Naive thymus-derived CD4-positive, alpha-beta T cell (primary cell): ENCODE measurements at regions of chr6 and their contacts with region 1.

Region 1: DNA sequence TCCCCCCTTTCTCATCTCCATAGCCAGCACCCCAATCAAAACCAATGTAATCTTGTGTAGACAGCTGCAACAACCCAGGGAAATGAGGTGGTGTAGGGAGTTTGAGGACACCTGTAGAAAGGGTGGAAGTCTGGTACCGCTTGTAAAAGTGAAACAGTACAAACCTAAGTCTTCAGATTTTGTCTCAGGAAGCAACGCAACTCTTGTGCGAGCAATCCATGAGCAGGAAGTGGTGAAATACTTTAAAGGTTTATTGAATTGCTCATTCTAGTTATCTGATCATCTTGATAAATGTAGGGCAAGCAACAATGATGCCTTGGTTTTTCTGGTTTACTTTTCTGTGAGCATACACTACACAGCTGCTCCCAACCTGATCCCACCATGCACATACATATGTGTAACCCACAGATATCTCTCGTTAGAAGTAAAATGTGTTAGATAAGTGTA is 71.1 kb upstream of the THEMIS start:
- DNase-seq: peak; percentile 9 to 89 (median 84)
- ATAC-seq: peak; percentile 92
- H3K4me3 ChIP-seq: peak overlapping the region; percentile 43
- H3K4me3 Mint-ChIP-seq: peak overlapping the region; percentile 73 to 96 (median 88)
- H3K27ac ChIP-seq: peak overlapping the region; percentile 83
- H3K27ac Mint-ChIP-seq: peak overlapping the region; percentile 71 to 99 (median 97)
- H3K4me1 ChIP-seq: peaks cover 36 to 49% of the 10 kb centered on the region in 2 donors
- H3K4me1 Mint-ChIP-seq: peaks cover 15 to 83% (median 68%) of the 10 kb centered on the region in 7 donors
- H3K27me3 ChIP-seq: no peaks in the 10 kb centered on the region
- H3K27me3 Mint-ChIP-seq: no peaks in the 10 kb centered on the region

Region 2: DNA sequence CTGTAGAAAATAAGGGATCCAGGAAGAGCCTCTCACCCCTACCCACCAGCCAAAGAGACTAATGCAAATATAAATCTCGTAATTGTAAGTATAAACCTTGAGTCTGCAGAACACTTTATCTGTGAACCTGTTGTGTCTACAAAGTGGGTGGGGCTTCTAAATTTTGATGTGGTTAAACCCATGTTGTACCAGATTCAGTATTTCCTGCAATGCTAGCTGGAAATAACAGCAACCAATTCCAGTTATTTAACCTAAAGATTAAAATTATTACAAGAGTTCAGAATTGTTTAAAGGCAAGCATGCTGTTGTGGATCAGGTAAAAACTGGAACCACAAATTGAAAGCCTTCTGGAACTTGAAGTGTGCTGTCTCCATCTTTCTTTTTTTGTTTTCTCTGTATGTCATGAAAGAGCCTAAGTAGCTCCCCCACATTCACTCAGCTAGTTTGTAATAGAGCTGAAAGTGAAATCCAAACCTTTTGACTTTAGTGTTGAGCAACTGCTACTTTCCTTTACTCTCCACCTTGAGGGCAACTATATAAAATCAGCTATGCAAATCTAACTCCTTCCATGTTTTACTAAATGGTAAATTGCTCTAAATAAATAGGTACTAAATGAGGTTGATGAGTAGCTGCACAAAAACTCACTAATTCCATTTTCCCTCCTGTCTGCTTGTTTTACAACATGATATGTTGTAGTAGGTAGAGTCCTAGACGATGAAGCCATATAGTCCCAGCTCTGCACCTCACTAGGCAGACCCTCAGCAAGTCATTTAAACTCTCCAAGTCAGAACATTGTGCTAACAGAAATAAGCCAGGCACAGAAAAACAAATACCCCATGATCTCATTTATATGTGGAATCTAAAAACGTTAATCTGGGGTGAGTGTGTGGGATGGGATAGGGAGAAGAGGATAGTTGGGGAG is 53.2 kb before region 1 on chr6:
- CTCF ChIA-PET with region 1: interaction called, 4 read pairs
- POLR2A ChIA-PET with region 1: interaction called, 12 read pairs
- intact Hi-C with region 1: loop called (anchors 1 kb)
- DNase-seq: peak in 7 of 9 donors; percentile 68 to 85 (median 80)
- ATAC-seq: peak; percentile 86
- H3K4me3 ChIP-seq: peak overlapping the region; percentile 79
- H3K4me3 Mint-ChIP-seq: peak overlapping the region; percentile 74 to 96 (median 88)
- H3K27ac ChIP-seq: peak overlapping the region; percentile 50
- H3K27ac Mint-ChIP-seq: peak overlapping the region; percentile 83 to 98 (median 93)
- H3K4me1 ChIP-seq: peaks cover 58 to 65% of the 10 kb centered on the region in 2 donors
- H3K4me1 Mint-ChIP-seq: peaks cover 33 to 95% (median 85%) of the 10 kb centered on the region in 7 donors
- H3K27me3 ChIP-seq: no peaks in the 10 kb centered on the region
- H3K27me3 Mint-ChIP-seq: no peaks in the 10 kb centered on the region

Region 3: DNA sequence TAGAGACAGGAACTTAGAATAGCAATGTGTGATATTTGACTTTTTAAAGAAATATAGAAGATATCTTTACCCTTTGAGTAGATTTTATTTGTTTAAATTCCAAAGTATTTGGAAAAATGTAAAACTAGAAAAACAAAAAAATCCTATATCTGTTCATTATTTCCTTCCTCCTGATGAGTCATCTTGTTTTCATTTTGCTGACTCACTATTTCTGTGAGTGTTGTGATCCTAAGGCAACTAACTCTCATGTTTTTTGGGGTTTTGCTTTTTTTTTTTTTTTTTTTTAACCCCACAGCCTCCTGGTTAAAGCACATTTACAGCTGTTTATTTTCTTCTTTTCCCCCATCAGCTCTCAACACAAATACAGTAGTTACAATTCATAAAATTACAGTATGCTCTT is 33.3 kb before region 1 on chr6:
- CTCF ChIA-PET with region 1: interaction called, 3 read pairs
- POLR2A ChIA-PET with region 1: interaction called, 17 read pairs
- intact Hi-C with region 1: loop called (anchors 1 kb)
- DNase-seq: no peak
- ATAC-seq: no peak
- H3K4me3 ChIP-seq: no peak overlapping the region
- H3K4me3 Mint-ChIP-seq: peak overlapping the region in 2 of 10 donors; percentile 14 to 39
- H3K27ac ChIP-seq: no peak overlapping the region
- H3K27ac Mint-ChIP-seq: peak overlapping the region in 5 of 9 donors; percentile 28 to 97 (median 57)
- H3K4me1 ChIP-seq: peaks cover 25 to 40% of the 10 kb centered on the region in 2 donors
- H3K4me1 Mint-ChIP-seq: peaks cover 21 to 81% (median 63%) of the 10 kb centered on the region in 7 donors
- H3K27me3 ChIP-seq: no peaks in the 10 kb centered on the region
- H3K27me3 Mint-ChIP-seq: no peaks in the 10 kb centered on the region

Region 4: GRCh38 chr6:128259730-128260685 is 288.0 kb after region 1 on chr6:
- CTCF ChIA-PET with region 1: no interaction called
- POLR2A ChIA-PET with region 1: no interaction called
- intact Hi-C with region 1: loop called in 1 of 2 experiments (anchors 1 kb)
- DNase-seq: peak in 7 of 9 donors; percentile 11 to 42 (median 29)
- ATAC-seq: peak; percentile 74
- H3K4me3 ChIP-seq: peak overlapping the region; percentile 30
- H3K4me3 Mint-ChIP-seq: peak overlapping the region; percentile 67 to 91 (median 84)
- H3K27ac ChIP-seq: peak overlapping the region; percentile 45
- H3K27ac Mint-ChIP-seq: peak overlapping the region; percentile 74 to 93 (median 90)
- H3K4me1 ChIP-seq: peaks cover 12 to 15% of the 10 kb centered on the region in 2 donors
- H3K4me1 Mint-ChIP-seq: peaks cover 15 to 46% (median 28%) of the 10 kb centered on the region in 7 donors
- H3K27me3 ChIP-seq: no peaks in the 10 kb centered on the region
- H3K27me3 Mint-ChIP-seq: peaks cover 0 to 3% (median 0%) of the 10 kb centered on the region in 5 donors

Region 5: GRCh38 chr6:128520436-128521281 is 548.7 kb after region 1 on chr6 and contains the start of gene PTPRK:
- CTCF ChIA-PET with region 1: interaction called, 4 read pairs
- POLR2A ChIA-PET with region 1: no interaction called
- intact Hi-C with region 1: loop called (anchors 2 kb)
- DNase-seq: peak; percentile 70 to 90 (median 87)
- ATAC-seq: peak; percentile 95
- H3K4me3 ChIP-seq: peak within 1 kb of the TSS; percentile 77
- H3K4me3 Mint-ChIP-seq: peak within 1 kb of the TSS; percentile 90 to 98 (median 94)
- H3K27ac ChIP-seq: peak within 1 kb of the TSS; percentile 59
- H3K27ac Mint-ChIP-seq: peak within 1 kb of the TSS; percentile 73 to 94 (median 82)
- H3K4me1 ChIP-seq: peaks cover 5 to 17% of the 10 kb centered on the region in 2 donors
- H3K4me1 Mint-ChIP-seq: peaks cover 8 to 22% (median 14%) of the 10 kb centered on the region in 7 donors
- H3K27me3 ChIP-seq: no peaks in the 10 kb centered on the region
- H3K27me3 Mint-ChIP-seq: peaks cover 52 to 89% (median 68%) of the 10 kb centered on the region in 5 donors
- total RNA-seq, gene PTPRK: 1.6 to 6.5 (median 3.9) TPM